Mammary epithelial cell (primary cell): ENCODE measurements at regions of chr10 and their contacts with region 1.

Region 1: DNA sequence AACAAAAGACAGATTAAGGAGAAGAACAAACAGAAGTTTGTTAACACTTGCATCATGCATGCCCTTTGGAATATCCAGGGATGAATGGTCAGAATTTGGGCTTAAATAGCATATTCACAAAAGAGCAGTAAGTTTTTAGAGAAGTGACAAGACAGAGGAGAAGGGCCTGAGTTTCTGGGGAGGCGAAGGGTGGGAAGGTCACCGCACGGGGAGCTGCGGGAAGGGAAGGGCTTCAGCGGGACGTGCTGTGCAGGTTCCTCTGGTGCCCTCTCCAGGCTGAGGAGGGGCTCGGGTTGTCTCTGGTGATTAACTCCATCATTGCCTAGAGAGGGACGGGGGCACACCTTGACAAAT is 10.4 kb upstream of the ZNF22 start:
- DNase-seq: no peak
- H3K4me3 ChIP-seq: no peak overlapping the region
- H3K27ac ChIP-seq: no peak overlapping the region
- H3K4me1 ChIP-seq: no peaks in the 10 kb centered on the region
- H3K27me3 ChIP-seq: no peaks in the 10 kb centered on the region
- CTCF ChIP-seq: no peak

Region 2: GRCh38 chr10:45076891-45077290 is 86.6 kb after region 1 on chr10:
- CTCF ChIA-PET with region 1: no interaction called
- dilution Hi-C with region 1: loop called (anchors 5 kb)
- in situ Hi-C with region 1: no loop called
- intact Hi-C with region 1: no loop called
- DNase-seq: no peak
- H3K4me3 ChIP-seq: no peak overlapping the region
- H3K27ac ChIP-seq: no peak overlapping the region
- H3K4me1 ChIP-seq: no peaks in the 10 kb centered on the region
- H3K27me3 ChIP-seq: no peaks in the 10 kb centered on the region
- CTCF ChIP-seq: no peak